Left cardiac atrium (tissue), 4 donors: ENCODE measurements at regions of chr1 and their contacts with region 1.

Region 1: GRCh38 chr1:86833461-86834215 is 80.3 kb downstream of the SELENOF start:
- DNase-seq: peak; percentile 77
- ATAC-seq: peak; percentile 91 to 96

Region 2: GRCh38 chr1:86704458-86704971 is 129.1 kb before region 1 on chr1 and contains the start of gene SH3GLB1:
- intact Hi-C with region 1: no loop called
- DNase-seq: peak; percentile 90
- ATAC-seq: peak; percentile 94 to 95
- total RNA-seq, gene SH3GLB1: 110 to 114 TPM

Region 3: GRCh38 chr1:86933562-86934377 is 100.1 kb after region 1 on chr1:
- intact Hi-C with region 1: no loop called
- DNase-seq: no peak
- ATAC-seq: no peak

Region 4: GRCh38 chr1:86965012-86965826 is 131.6 kb after region 1 on chr1:
- intact Hi-C with region 1: loop called (anchors 2 to 5 kb)
- DNase-seq: no peak
- ATAC-seq: peak; percentile 44

Region 5: DNA sequence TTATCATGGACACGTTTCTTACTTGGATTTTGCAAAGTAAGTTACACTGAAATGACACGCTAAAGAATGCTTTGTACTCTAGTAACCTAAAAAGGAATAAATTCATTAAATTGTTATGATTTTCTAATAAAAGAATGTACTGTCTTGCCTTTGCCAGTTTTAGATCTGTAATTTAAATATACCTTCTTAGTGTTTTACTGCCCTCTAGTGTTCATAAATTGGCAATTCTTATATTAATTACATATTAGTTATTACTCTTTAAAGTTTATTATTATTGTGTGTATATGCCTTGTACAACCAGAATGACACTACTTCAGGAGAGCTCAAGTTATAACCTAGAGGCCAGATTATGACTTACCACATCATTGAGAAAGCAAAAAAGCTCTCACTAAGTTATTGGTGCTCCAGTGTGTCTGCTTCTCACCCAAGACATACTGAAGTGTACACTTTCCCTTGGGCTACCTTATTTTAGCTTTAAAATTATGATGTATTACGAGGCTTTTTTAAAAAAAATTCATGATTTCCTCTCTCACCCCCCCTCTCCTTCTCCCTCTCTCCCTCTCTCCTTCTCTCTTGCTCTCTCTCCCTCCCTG is 250.7 kb after region 1 on chr1:
- intact Hi-C with region 1: loop called (anchors 2 to 10 kb)
- DNase-seq: no peak
- ATAC-seq: peak in 1 of 2 donors; percentile 27